Head of caudate nucleus (tissue), 42 donors: ENCODE measurements at regions of chr9 and their contacts with region 1.

Region 1: GRCh38 chr9:127949827-127950512 is 12.3 kb upstream of the DPM2 start:
- DNase-seq: peak in 38 of 42 donors; percentile 62 to 92 (median 78)

Region 2: DNA sequence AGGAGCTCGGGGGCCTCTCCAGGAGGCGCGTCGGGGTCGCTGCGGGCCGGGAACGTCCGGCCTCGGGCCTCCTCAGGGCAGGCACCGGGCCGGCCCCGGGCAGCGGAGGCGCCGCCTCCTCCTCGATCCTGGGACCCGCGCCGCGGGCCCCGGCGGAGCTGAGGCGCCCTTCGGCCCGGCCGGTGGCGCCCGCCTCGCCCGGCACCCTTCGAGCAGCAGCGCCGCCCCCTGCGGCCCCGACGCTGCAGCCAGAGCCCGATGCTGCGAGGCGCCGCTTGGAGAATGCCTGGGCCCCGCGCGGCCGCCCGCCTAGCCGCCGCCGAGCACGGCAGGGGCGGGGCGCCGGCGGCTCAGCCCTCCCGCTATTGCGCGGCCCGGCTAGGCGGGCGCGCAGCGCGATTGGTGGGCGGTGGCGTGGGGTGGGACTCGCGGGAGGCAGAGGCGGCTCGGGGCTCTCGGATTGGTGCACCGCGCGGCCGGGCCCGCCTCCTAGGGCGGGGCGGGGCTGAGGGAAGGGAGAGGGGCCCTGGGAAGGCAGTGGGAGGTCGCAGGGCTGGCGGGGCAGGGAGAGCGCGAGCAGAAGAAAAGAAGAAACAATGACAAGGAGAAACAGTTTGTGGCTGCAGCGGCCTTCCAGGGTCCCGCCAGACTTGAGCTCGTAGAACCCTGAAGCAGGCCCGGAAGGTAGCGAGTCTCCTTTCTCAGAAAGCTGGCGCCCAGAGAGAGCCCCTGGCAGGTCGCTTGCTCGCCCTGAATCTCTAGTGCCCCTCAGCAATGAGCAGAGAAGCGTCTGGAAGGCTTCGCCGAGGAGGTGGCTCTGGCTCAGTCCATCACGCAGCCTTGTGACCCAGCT is 31.0 kb after region 1 on chr9 and contains the start of gene EEIG1:
- intact Hi-C with region 1: loop called (anchors 5 kb)
- DNase-seq: peak; percentile 90 to 100 (median 98)

Region 3: GRCh38 chr9:128026773-128027541 is 77.0 kb after region 1 on chr9:
- intact Hi-C with region 1: no loop called
- DNase-seq: no peak